ENCODE measurements at regions of chr3 and their contacts with region 1.

Region 1: DNA sequence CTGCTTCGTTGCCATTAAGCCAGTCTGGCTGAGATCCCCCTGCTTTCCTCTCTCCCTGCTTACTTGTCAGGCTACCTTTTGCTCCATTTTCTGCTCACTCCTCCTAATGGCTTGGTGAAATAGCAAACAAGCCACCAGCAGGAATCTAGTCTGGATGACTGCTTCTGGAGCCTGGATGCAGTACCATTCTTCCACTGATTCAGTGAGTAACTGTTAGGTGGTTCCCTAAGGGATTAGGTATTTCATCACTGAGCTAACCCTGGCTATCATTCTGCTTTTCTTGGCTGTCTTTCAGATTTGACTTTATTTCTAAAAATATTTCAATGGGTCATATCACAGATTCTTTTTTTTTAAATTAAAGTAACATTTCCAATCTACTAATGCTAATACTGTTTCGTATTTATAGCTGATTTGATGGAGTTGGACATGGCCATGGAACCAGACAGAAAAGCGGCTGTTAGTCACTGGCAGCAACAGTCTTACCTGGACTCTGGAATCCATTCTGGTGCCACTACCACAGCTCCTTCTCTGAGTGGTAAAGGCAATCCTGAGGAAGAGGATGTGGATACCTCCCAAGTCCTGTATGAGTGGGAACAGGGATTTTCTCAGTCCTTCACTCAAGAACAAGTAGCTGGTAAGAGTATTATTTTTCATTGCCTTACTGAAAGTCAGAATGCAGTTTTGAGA is 25.0 kb downstream of the CTNNB1 start:
- DNase-seq: no peak
- H3K4me3 ChIP-seq: no peak overlapping the region
- H3K27ac ChIP-seq: no peak overlapping the region
- H3K4me1 ChIP-seq: peaks cover 0 to 7% (median 2%) of the 10 kb centered on the region in 4 experiments
- H3K27me3 ChIP-seq: no peaks in the 10 kb centered on the region

Region 2: GRCh38 chr3:41234823-41235721 is 10.8 kb after region 1 on chr3:
- CTCF ChIA-PET with region 1: interaction called, 11 read pairs
- POLR2A ChIA-PET with region 1: interaction called, 3 read pairs
- DNase-seq: no peak
- H3K4me3 ChIP-seq: no peak overlapping the region
- H3K27ac ChIP-seq: no peak overlapping the region
- H3K4me1 ChIP-seq: no peaks in the 10 kb centered on the region
- H3K27me3 ChIP-seq: no peaks in the 10 kb centered on the region

Measured in common myeloid progenitor, CD34-positive (primary cell).